Gastrocnemius medialis (tissue), 4 donors: ENCODE measurements at regions of chr1 and their contacts with region 1.

Region 1: DNA sequence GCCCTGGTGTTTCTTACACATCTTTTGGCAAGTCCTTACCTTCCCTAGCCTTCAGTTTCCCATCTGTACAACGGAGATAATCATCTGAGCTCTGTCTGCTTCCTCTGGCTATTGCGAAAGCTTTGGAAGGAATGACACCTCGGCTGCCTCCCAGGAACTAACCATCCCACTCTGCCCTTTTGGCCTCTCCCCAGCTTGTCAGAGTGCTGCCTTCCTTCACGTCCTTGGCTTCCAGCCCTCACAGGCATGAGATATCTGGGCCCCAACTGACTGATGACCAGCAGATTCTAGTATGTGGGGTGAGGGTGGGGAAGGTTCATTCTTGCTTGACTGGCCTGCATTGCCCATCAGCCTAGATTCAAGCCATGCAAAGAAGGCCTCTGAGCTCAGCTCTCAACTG is 253.1 kb upstream of the FGGY start:
- DNase-seq: peak; percentile 74 to 87
- ATAC-seq: peak; percentile 91
- H3K4me3 ChIP-seq: no peak overlapping the region
- H3K27ac ChIP-seq: peak overlapping the region; percentile 64 to 76 (median 74)
- H3K4me1 ChIP-seq: peaks cover 17 to 19% of the 10 kb centered on the region in 2 donors
- H3K27me3 ChIP-seq: no peaks in the 10 kb centered on the region
- CTCF ChIP-seq: no peak
- POLR2A ChIP-seq: no peak

Region 2: DNA sequence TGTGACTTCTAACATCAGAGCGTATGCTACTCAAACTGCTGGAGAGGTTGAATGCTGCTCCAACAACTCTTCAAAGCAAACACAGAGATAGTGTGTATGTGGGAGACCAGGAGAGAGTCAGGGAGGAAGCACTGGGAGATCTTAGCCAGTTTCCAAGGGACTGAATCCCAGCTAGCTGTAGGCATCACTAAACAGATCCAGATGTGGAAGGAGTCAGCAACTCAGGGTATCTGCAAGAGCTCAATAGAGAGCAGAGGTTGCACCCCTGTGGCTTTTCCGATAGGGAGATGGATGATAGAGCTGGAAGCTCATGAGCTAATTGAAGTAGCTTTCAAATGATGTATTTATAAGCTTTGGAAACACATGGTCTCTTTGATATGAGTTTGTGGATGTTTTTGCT is 602.1 kb after region 1 on chr1:
- in situ Hi-C with region 1: no loop called
- intact Hi-C with region 1: no loop called
- DNase-seq: no peak
- ATAC-seq: no peak
- H3K4me3 ChIP-seq: no peak overlapping the region
- H3K27ac ChIP-seq: peak overlapping the region in 1 of 4 donors; percentile 16
- H3K4me1 ChIP-seq: no peaks in the 10 kb centered on the region
- H3K27me3 ChIP-seq: no peaks in the 10 kb centered on the region
- CTCF ChIP-seq: no peak
- POLR2A ChIP-seq: no peak

Region 3: GRCh38 chr1:59926381-59927123 is 882.8 kb after region 1 on chr1 and contains the start of gene CYP2J2:
- in situ Hi-C with region 1: no loop called
- intact Hi-C with region 1: loop called (anchors 5 kb)
- DNase-seq: peak; percentile 15 to 73
- ATAC-seq: peak; percentile 87 to 89
- H3K4me3 ChIP-seq: peak within 1 kb of the TSS; percentile 51 to 72 (median 58)
- H3K27ac ChIP-seq: peak within 1 kb of the TSS; percentile 71 to 84 (median 76)
- H3K4me1 ChIP-seq: peaks cover 0 to 9% of the 10 kb centered on the region in 2 donors
- H3K27me3 ChIP-seq: no peaks in the 10 kb centered on the region
- CTCF ChIP-seq: no peak
- POLR2A ChIP-seq: peak; percentile 40 to 51
- total RNA-seq, gene CYP2J2: 2.4 to 8.7 (median 3.2) TPM